ENCODE measurements at regions of chr7 and their contacts with region 1.

Region 1: DNA sequence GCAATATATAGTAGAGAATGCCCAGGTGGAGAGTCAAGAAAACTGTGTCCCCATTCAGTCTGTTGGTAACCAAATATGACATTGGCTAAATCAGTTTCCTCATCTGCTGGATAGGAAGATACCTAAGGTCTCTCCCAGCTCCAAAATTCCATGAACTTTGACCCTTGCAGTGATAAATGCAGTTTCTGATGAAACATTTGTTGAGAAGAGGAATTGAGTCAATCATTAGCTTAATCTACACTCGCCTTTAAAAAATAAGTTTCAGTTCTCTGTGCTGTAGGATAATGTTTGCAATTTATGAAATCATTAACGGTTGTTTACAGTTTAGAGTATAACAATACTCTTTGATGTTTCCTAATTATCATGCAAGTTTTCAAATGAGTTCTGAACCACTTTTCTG is 38.0 kb upstream of the SLC25A13 start:
- DNase-seq: no peak
- H3K4me3 Mint-ChIP-seq: no peak overlapping the region
- H3K27ac Mint-ChIP-seq: no peak overlapping the region
- H3K4me1 Mint-ChIP-seq: no peaks in the 10 kb centered on the region
- H3K27me3 Mint-ChIP-seq: peaks cover 3% of the 10 kb centered on the region

Region 2: GRCh38 chr7:96075510-96076349 is 284.1 kb before region 1 on chr7:
- intact Hi-C with region 1: loop called (anchors 10 kb)
- DNase-seq: peak; percentile 20
- H3K4me3 Mint-ChIP-seq: peak overlapping the region; percentile 77
- H3K27ac Mint-ChIP-seq: no peak overlapping the region
- H3K4me1 Mint-ChIP-seq: peaks cover 4% of the 10 kb centered on the region
- H3K27me3 Mint-ChIP-seq: peaks cover 46% of the 10 kb centered on the region

Region 3: GRCh38 chr7:96188174-96188581 is 171.7 kb before region 1 on chr7:
- intact Hi-C with region 1: no loop called
- DNase-seq: no peak
- H3K4me3 Mint-ChIP-seq: no peak overlapping the region
- H3K27ac Mint-ChIP-seq: no peak overlapping the region
- H3K4me1 Mint-ChIP-seq: no peaks in the 10 kb centered on the region
- H3K27me3 Mint-ChIP-seq: no peaks in the 10 kb centered on the region